A549 (cell line): ENCODE measurements at regions of chr6 and their contacts with region 1.

Region 1: DNA sequence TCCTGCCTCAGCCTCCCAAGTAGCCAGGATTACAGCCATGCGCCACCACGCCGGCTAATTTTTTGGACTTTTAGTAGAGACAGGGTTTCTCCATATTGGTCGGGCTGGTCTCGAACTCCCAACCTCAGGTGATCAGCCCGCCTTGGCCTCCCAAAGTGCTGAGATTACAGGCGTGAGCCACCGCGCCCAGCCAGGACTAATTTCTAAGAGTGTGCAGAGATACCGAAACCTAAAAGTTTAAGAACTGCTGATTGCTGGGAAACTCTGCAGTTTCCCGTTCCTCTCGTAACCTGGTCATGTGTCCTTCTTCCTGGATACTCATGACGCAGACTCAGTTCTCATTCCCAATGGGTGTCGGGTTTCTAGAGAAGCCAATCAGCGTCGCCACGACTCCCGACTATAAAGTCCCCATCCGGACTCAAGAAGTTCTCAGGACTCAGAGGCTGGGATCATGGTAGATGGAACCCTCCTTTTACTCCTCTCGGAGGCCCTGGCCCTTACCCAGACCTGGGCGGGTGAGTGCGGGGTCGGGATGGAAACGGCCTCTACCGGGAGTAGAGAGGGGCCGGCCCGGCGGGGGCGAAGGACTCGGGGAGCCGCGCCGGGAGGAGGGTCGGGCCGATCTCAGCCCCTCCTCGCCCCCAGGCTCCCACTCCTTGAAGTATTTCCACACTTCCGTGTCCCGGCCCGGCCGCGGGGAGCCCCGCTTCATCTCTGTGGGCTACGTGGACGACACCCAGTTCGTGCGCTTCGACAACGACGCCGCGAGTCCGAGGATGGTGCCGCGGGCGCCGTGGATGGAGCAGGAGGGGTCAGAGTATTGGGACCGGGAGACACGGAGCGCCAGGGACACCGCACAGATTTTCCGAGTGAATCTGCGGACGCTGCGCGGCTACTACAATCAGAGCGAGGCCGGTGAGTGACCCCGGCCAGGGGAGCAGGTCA is at the start of gene HLA-E:
- DNase-seq: peak; percentile 87 to 98
- ATAC-seq: peak; percentile 96
- H3K4me3 ChIP-seq: peak within 1 kb of the TSS; percentile 90
- H3K27ac ChIP-seq: peak within 1 kb of the TSS; percentile 76 to 92
- H3K4me1 ChIP-seq: peaks cover 5% of the 10 kb centered on the region; the same call in 1 of the 3 replicates
- CTCF ChIP-seq: no peak
- EP300 ChIP-seq: no peak
- POLR2A ChIP-seq: peak; percentile 84
- RAD21 ChIP-seq: no peak
- polyA plus RNA-seq, gene HLA-E: 38.3 and 40.0 TPM in 2 replicates

Region 2: DNA sequence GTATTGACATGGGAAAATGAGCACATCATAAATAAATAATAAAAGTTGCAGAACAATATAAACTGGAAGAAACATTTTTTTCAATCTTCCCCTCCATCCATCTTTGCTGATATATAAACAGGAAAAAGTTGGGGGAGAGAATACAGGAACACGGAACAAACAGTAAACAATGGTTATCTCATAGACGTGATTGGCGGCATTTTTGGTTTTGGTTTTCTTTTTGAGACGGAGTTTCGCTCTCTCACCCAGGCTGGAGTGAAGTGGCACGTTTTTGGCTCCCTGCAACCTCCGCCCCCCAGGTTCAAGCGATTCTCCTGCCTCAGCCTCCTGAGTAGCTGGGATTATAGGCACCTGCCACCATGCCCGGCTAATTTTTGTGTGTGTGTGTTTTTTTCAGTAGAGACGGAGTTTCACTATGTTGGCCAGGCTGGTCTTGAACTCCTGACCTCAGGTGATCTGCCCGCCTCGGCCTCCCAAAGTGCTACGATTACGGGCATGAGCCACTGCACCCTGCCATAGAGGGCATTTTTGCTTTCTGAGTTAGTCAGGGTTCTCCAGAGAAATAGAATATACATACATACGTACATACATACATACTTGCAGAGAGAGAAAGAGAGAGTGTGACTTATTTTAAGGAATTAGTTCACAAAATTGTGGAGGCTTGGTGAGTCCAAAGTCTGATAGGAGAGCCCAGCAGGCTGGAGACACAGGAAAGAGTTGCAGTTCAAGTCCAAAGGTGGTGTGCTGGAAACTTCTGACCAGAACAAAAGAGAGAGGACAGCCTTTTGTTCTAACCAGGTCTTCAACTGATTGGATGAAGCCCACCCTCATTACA is 44.3 kb after region 1 on chr6:
- CTCF ChIA-PET with region 1: interaction called, 320 read pairs
- POLR2A ChIA-PET with region 1: no interaction called
- DNase-seq: no peak
- ATAC-seq: no peak
- H3K4me3 ChIP-seq: no peak overlapping the region
- H3K27ac ChIP-seq: no peak overlapping the region
- H3K4me1 ChIP-seq: no peaks in the 10 kb centered on the region
- CTCF ChIP-seq: no peak
- EP300 ChIP-seq: no peak
- POLR2A ChIP-seq: no peak
- RAD21 ChIP-seq: no peak